Activated B cell treated with CpG ODN at 0.5 μM for 24 hours (primary cell): ENCODE measurements at regions of chr6 and their contacts with region 1.

Region 1: DNA sequence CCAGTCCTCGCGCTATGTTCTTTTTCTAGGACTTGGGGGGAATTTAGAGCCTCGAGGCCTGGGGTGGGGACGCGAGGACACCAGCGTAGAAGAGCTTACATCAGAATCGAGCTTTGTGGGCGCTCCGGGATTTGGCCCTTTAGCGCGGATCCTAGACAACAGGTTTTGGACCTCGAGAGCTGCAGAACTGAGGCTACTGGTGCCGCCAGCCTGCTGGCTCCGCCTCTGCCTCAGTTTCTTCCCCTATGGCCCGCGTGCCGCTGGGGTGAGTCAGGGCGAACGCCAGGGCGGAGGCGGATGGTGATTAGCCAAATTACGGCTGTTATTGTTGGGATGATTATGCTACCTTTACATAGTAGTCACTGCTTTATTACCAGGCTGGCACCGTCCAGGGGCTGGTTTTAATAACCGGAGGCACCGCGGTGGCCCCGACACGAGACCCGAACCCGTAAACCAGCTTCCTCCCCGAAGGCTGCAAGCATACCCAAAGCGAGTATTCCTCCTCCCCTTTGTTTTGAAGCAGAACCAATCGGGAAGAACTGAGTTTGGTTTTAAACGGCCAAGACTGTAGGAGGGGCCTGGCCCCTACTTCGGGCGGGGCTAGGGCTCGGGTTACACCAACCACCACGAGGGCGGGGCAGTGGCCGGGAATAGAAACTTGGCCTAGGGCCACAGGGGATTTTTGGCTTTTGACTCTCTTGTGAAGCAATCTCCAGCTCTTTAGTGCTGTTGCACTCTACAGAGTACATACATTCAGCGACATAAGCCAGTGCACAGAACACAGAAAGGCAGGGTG is 639 bp upstream of the GTPBP2 start:
- DNase-seq: peak; percentile 87
- ATAC-seq: peak; percentile 70
- H3K4me3 Mint-ChIP-seq: peak overlapping the region; percentile 98
- H3K27ac Mint-ChIP-seq: peak overlapping the region; percentile 99
- H3K4me1 Mint-ChIP-seq: peaks cover 41% of the 10 kb centered on the region
- H3K27me3 Mint-ChIP-seq: no peaks in the 10 kb centered on the region
- CTCF ChIP-seq: no peak

Region 2: DNA sequence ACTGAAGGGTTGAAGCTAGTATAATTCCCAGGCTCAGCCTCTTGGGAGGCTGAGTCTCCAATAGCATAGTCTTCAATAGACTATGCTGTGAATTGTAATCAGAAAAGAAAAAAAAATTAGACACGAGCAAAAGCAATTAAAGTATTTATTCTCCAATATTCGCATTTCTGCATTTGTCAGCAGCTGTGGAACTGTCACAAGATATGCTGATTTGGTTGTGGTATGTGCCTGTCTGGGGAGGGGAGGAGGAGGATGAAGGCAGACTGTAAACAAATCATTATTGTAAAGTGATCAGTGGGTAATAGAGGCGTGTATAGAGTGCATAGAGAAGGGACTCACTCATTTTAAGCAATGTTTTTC is 858.0 kb before region 1 on chr6:
- CTCF ChIA-PET with region 1: no interaction called
- POLR2A ChIA-PET with region 1: interaction called, 6 read pairs
- intact Hi-C with region 1: loop called (anchors 5 kb)
- DNase-seq: no peak
- ATAC-seq: no peak
- H3K4me3 Mint-ChIP-seq: peak overlapping the region; percentile 85
- H3K27ac Mint-ChIP-seq: peak overlapping the region; percentile 99
- H3K4me1 Mint-ChIP-seq: peaks cover 57% of the 10 kb centered on the region
- H3K27me3 Mint-ChIP-seq: no peaks in the 10 kb centered on the region
- CTCF ChIP-seq: no peak

Region 3: DNA sequence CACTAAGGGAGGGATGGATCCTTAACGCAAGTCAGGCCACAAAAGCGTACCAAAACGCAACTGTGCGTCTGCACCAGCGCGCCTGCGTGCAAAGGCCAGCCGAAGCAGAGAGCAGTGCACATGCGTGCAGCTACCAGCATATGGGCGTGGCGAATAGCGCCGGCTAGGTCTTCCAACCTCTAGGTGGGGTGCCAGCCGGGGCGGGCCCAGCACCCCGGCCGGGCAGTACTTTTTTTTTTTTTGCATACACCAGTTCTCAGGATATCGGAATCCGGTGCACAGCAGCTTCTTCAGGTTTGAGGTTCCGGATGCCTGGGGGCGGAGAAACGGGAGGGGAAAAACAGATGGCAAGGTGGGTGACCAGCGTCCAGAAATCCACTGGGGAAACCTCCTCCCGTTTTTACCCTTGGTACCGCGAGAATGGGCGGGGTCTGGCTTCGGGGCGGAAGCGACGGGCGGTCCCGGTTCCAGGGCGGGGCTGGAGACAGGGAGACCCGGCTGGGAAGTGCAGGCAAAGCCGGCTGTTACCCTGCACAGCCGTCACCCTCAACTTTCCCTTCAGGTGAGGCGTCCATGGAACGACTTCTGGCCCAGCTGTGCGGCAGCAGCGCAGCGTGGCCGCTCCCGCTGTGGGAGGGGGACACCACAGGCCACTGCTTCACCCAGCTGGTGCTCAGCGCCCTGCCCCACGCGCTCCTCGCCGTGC is 202.1 kb before region 1 on chr6 and contains the start of gene ABCC10:
- CTCF ChIA-PET with region 1: no interaction called
- POLR2A ChIA-PET with region 1: no interaction called
- intact Hi-C with region 1: loop called (anchors 1 kb)
- DNase-seq: peak; percentile 90
- ATAC-seq: peak; percentile 93
- H3K4me3 Mint-ChIP-seq: peak within 1 kb of the TSS; percentile 95
- H3K27ac Mint-ChIP-seq: peak within 1 kb of the TSS; percentile 95
- H3K4me1 Mint-ChIP-seq: peaks cover 20% of the 10 kb centered on the region
- H3K27me3 Mint-ChIP-seq: no peaks in the 10 kb centered on the region
- CTCF ChIP-seq: no peak
- total RNA-seq, gene ABCC10: 59.5 and 74.6 TPM in 2 replicates

Region 4: DNA sequence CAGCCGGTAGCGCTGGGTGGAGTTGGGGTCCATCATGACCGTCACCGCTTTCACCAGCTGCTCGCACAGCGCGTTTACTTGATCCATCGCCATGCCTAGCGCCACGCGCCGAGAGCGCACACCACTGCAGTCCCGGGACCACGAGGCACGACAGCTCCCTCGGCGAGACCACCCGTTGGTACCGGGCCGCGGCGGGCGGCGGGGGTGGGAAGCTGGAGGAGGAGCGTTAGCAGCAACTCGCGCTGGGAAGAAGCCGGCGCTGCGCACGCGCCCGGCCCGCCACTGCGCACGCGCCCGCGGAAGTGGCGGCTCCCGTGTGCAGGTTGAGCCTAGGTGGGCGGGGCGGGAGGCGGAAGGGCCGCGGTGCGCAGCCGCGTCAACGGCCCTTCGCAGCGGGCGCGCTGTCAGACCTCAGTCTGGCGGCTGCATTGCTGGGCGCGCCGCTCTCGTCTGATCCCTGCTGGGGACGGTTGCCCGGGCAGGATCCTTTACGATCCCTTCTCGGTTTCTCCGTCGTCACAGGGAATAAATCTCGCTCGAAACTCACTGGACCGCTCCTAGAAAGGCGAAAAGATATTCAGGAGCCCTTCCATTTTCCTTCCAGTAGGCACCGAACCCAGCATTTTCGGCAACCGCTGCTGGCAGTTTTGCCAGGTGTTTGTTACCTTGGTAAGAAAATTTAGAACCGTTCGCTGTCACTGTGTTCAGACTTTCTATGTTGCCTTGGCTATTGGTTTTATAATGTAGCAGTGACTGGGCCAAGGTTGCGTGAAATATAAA is 53.7 kb before region 1 on chr6 and contains the starts of genes POLH and XPO5:
- CTCF ChIA-PET with region 1: no interaction called
- POLR2A ChIA-PET with region 1: interaction called, 8 read pairs
- intact Hi-C with region 1: loop called (anchors 1 kb)
- DNase-seq: peak; percentile 91
- ATAC-seq: peak; percentile 94
- H3K4me3 Mint-ChIP-seq: peak within 1 kb of the TSS; percentile 97
- H3K27ac Mint-ChIP-seq: peak within 1 kb of the TSS; percentile 86
- H3K4me1 Mint-ChIP-seq: peaks cover 38% of the 10 kb centered on the region
- H3K27me3 Mint-ChIP-seq: no peaks in the 10 kb centered on the region
- CTCF ChIP-seq: no peak
- total RNA-seq, gene POLH: 23.3 and 26.5 TPM in 2 replicates
- total RNA-seq, gene XPO5: 54.4 and 59.4 TPM in 2 replicates

Region 5: DNA sequence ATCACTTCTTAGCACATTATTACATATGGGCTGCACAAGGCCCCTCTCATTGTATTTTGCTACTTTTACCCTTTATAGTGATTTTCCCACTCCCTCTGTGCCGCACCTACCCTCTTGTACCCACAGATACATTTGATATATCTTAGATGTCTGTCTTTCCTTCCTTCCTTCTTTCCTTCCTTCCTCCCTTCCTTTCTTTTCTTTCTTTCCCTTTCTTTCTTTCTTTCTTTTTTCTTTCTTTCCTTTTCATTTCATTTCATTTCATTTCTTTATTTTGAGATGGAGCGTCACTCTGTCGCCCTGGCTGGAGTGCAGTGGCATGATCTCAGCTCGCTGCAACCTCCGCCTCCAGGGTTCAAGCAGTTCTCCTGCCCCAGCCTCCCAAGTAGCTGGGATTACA is 41.5 kb before region 1 on chr6:
- CTCF ChIA-PET with region 1: no interaction called
- POLR2A ChIA-PET with region 1: no interaction called
- intact Hi-C with region 1: no loop called
- DNase-seq: no peak
- ATAC-seq: no peak
- H3K4me3 Mint-ChIP-seq: no peak overlapping the region
- H3K27ac Mint-ChIP-seq: no peak overlapping the region
- H3K4me1 Mint-ChIP-seq: peaks cover 5% of the 10 kb centered on the region
- H3K27me3 Mint-ChIP-seq: no peaks in the 10 kb centered on the region
- CTCF ChIP-seq: no peak

Region 6: DNA sequence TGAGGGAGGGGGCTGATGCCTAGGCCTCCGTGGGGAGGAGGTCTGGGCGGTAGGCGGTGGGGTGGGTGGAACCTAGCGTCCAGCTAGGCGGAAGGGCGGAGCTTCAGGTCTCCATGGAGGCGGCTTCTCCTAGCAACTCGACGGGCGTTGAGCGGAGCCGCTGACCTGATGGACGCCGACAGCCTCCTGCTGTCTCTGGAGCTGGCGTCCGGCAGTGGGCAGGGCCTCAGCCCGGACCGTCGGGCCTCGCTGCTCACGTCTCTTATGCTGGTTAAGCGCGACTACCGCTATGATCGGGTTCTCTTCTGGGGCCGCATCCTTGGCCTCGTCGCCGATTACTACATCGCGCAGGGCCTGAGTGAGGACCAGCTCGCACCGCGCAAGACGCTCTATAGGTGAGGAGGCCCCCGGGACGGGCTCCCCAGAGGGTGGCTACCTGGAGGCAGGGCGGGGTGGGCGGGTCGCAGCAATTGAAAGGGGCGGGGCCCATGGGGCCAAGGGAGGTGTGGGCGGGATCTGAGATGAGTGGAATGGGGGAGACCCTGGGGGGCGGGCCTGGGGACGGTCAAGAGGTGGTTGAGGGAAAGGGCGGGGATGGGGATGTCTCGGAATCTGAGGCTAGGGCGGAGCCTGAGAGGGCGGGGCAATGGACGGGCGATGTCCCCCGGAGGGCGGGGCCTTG is 15.4 kb after region 1 on chr6 and contains the start of gene RSPH9:
- CTCF ChIA-PET with region 1: interaction called, 5 read pairs
- POLR2A ChIA-PET with region 1: interaction called, 13 read pairs
- intact Hi-C with region 1: loop called (anchors 1 kb)
- DNase-seq: peak; percentile 72
- ATAC-seq: peak; percentile 92
- H3K4me3 Mint-ChIP-seq: peak within 1 kb of the TSS; percentile 87
- H3K27ac Mint-ChIP-seq: peak within 1 kb of the TSS; percentile 24
- H3K4me1 Mint-ChIP-seq: peaks cover 11% of the 10 kb centered on the region
- H3K27me3 Mint-ChIP-seq: no peaks in the 10 kb centered on the region
- CTCF ChIP-seq: no peak
- total RNA-seq, gene RSPH9: 0.17 TPM in 1 of 2 replicates, not detected in the other

Region 7: DNA sequence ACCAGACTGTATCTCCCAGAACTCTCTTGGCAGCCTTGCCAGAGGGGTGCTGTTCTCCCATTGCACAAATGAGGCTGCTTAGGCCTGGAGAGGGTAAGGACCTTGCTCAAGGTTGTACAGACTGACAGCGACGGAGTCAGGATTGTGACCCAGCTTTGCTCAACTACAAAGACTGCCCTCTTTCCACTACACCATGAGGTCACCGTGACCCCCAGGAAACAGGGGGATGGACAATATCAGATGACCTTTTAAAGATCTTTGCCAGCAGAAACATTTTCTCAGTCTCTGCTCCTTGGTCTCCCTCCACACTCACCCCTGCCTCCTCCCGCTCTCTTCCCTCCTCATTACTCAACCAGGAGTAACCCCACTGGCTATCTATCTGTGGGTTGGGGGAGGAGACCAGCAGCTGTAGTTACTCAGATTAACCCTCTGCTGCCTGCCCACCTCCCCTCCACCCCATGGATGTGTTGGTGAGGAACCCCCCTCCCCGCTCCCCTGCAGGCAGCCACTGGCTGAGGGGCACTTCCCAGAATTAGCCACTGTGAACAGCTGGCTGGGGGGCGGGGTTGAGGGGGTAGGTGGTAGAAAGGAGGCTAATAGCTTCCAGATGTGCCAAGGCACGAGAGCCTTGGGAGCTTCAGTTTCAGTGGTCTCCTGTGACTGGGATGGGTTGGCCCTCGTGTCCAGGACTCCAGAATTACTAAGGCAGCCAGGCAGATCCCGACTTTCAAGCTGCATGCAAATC is 84.8 kb after region 1 on chr6:
- CTCF ChIA-PET with region 1: no interaction called
- POLR2A ChIA-PET with region 1: interaction called, 18 read pairs
- intact Hi-C with region 1: no loop called
- DNase-seq: peak; percentile 65
- ATAC-seq: peak; percentile 15
- H3K4me3 Mint-ChIP-seq: peak overlapping the region; percentile 81
- H3K27ac Mint-ChIP-seq: peak overlapping the region; percentile 91
- H3K4me1 Mint-ChIP-seq: peaks cover 60% of the 10 kb centered on the region
- H3K27me3 Mint-ChIP-seq: no peaks in the 10 kb centered on the region
- CTCF ChIP-seq: no peak

Region 8: DNA sequence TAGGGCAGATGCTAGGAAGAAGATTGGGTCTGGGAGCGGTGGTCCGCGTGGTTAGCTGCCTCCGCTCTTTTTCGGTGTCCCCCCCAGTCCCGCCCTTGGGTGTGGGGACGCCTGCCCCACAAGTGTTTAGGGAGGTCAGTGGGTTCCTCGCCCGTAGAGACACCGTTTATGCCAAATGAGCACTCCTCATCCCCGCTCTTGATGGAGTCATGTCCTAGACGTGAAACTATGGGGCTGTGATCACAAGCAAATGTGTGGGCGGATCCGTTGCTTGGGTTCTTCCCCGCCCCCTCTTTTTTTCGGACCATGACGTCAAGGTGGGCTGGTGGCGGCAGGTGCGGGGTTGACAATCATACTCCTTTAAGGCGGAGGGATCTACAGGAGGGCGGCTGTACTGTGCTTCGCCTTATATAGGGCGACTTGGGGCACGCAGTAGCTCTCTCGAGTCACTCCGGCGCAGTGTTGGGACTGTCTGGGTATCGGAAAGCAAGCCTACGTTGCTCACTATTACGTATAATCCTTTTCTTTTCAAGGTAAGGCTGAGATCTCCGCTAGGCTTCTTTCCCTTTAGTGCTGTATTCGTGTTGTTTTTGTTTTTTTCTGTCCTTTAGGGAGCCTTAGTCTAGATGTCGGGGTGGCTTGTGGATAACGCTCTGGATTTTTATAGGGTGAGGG is 617.1 kb after region 1 on chr6 and contains the start of gene HSP90AB1:
- CTCF ChIA-PET with region 1: no interaction called
- POLR2A ChIA-PET with region 1: interaction called, 23 read pairs
- intact Hi-C with region 1: loop called (anchors 2 kb)
- DNase-seq: peak; percentile 88
- ATAC-seq: peak; percentile 75
- H3K4me3 Mint-ChIP-seq: peak within 1 kb of the TSS; percentile 99
- H3K27ac Mint-ChIP-seq: peak within 1 kb of the TSS; percentile 99
- H3K4me1 Mint-ChIP-seq: peaks cover 56% of the 10 kb centered on the region
- H3K27me3 Mint-ChIP-seq: no peaks in the 10 kb centered on the region
- CTCF ChIP-seq: no peak
- total RNA-seq, gene HSP90AB1: 1,222 and 1,311 TPM in 2 replicates